Tibial artery (tissue), 4 donors: ENCODE measurements at regions of chr3 and their contacts with region 1.

Region 1: GRCh38 chr3:45507820-45508317 is 86.7 kb upstream of the LIMD1 start:
- DNase-seq: no peak
- H3K4me3 ChIP-seq: no peak overlapping the region
- H3K27ac ChIP-seq: no peak overlapping the region
- H3K4me1 ChIP-seq: no peaks in the 10 kb centered on the region
- H3K27me3 ChIP-seq: no peaks in the 10 kb centered on the region
- CTCF ChIP-seq: no peak

Region 2: DNA sequence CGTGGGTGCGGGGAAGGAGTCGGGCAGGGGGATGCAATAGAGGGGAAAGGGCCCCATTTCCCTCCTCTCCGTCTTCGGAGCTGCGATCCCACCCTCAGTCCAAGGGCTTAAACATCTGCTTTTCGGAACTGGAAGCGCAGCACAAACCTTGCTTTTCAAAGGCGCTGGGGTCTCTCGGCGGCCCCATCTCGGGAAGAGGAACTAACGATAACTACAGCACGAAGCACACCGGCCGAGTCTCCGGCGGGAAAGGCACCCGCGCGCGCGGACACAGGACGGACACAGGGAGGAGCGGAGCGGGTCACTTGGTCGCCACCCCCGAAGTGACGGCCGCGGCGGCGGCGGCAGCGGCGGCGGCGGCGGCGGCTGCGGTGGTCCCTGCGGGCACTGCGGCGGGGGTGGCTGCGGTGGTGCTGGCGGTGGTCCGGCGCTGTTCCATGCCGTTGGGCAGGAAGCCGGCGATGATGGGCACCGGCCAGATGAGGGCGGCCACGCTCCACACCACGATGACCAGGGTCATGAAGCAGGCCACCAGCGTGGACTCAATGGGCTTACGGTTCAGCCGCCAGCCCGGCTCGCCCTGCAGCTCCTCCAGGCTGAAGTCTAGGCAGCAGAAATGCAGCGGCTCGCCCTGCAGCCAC is 282.9 kb before region 1 on chr3:
- intact Hi-C with region 1: loop called (anchors 10 kb)
- DNase-seq: peak; percentile 63 to 79
- H3K4me3 ChIP-seq: peak overlapping the region; percentile 47 to 69
- H3K27ac ChIP-seq: no peak overlapping the region
- H3K4me1 ChIP-seq: peaks cover 0 to 18% (median 6%) of the 10 kb centered on the region in 4 donors
- H3K27me3 ChIP-seq: peaks cover 0 to 53% of the 10 kb centered on the region in 2 donors
- CTCF ChIP-seq: peak; percentile 38 to 42

Region 3: GRCh38 chr3:45371621-45372020 is 136.2 kb before region 1 on chr3:
- intact Hi-C with region 1: no loop called
- DNase-seq: no peak
- H3K4me3 ChIP-seq: no peak overlapping the region
- H3K27ac ChIP-seq: no peak overlapping the region
- H3K4me1 ChIP-seq: no peaks in the 10 kb centered on the region
- H3K27me3 ChIP-seq: no peaks in the 10 kb centered on the region
- CTCF ChIP-seq: no peak